ENCODE measurements at regions of chr5 and their contacts with region 1.

Region 1: GRCh38 chr5:96336351-96336985 is 96.6 kb downstream of the PCSK1 start:
- DNase-seq: peak; percentile 89
- H3K4me3 Mint-ChIP-seq: no peak overlapping the region
- H3K27ac Mint-ChIP-seq: no peak overlapping the region
- H3K4me1 Mint-ChIP-seq: peaks cover 21% of the 10 kb centered on the region
- H3K27me3 Mint-ChIP-seq: no peaks in the 10 kb centered on the region
- CTCF ChIP-seq: peak; percentile 84

Region 2: GRCh38 chr5:95846554-95847260 is 489.8 kb before region 1 on chr5:
- CTCF ChIA-PET with region 1: interaction called, 10 read pairs
- POLR2A ChIA-PET with region 1: no interaction called
- intact Hi-C with region 1: no loop called
- DNase-seq: peak; percentile 84
- H3K4me3 Mint-ChIP-seq: no peak overlapping the region
- H3K27ac Mint-ChIP-seq: no peak overlapping the region
- H3K4me1 Mint-ChIP-seq: peaks cover 32% of the 10 kb centered on the region
- H3K27me3 Mint-ChIP-seq: no peaks in the 10 kb centered on the region
- CTCF ChIP-seq: peak; percentile 91

Region 3: GRCh38 chr5:95900383-95900958 is 436.0 kb before region 1 on chr5:
- CTCF ChIA-PET with region 1: interaction called, 5 read pairs
- POLR2A ChIA-PET with region 1: interaction called, 14 read pairs
- intact Hi-C with region 1: no loop called
- DNase-seq: peak; percentile 40
- H3K4me3 Mint-ChIP-seq: no peak overlapping the region
- H3K27ac Mint-ChIP-seq: peak overlapping the region; percentile 59
- H3K4me1 Mint-ChIP-seq: peaks cover 26% of the 10 kb centered on the region
- H3K27me3 Mint-ChIP-seq: no peaks in the 10 kb centered on the region
- CTCF ChIP-seq: no peak

Region 4: GRCh38 chr5:96079075-96079474 is 257.4 kb before region 1 on chr5:
- CTCF ChIA-PET with region 1: interaction called, 11 read pairs
- POLR2A ChIA-PET with region 1: interaction called, 7 read pairs
- intact Hi-C with region 1: loop called (anchors 2 kb)
- DNase-seq: peak; percentile 93
- H3K4me3 Mint-ChIP-seq: peak overlapping the region; percentile 25
- H3K27ac Mint-ChIP-seq: peak overlapping the region; percentile 96
- H3K4me1 Mint-ChIP-seq: peaks cover 57% of the 10 kb centered on the region
- H3K27me3 Mint-ChIP-seq: no peaks in the 10 kb centered on the region
- CTCF ChIP-seq: no peak

Region 5: DNA sequence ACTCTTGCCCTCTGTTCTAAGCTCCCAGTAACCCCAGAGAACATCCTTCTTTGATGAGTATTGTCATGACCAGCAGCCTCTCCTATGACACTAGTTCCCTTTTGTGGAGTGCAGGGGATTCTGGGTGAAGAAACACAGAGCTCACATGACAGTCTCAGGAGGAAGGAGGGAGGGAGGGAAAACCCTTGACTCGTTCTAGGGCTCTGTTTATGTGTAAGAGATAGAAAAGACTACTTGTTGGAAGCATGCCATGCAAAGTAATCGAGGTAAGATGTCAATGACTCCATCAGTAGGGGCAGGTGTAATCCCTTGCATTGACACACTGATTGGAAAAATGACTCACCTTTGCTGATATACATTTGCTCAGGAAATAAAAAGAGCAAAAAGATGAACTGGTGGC is 184.6 kb before region 1 on chr5:
- CTCF ChIA-PET with region 1: interaction called, 15 read pairs
- POLR2A ChIA-PET with region 1: interaction called, 7 read pairs
- intact Hi-C with region 1: loop called (anchors 5 kb)
- DNase-seq: no peak
- H3K4me3 Mint-ChIP-seq: no peak overlapping the region
- H3K27ac Mint-ChIP-seq: no peak overlapping the region
- H3K4me1 Mint-ChIP-seq: peaks cover 28% of the 10 kb centered on the region
- H3K27me3 Mint-ChIP-seq: no peaks in the 10 kb centered on the region
- CTCF ChIP-seq: no peak

Region 6: GRCh38 chr5:96226941-96227552 is 109.4 kb before region 1 on chr5:
- CTCF ChIA-PET with region 1: interaction called, 7 read pairs
- POLR2A ChIA-PET with region 1: interaction called, 7 read pairs
- intact Hi-C with region 1: loop called (anchors 1 kb)
- DNase-seq: peak; percentile 77
- H3K4me3 Mint-ChIP-seq: peak overlapping the region; percentile 46
- H3K27ac Mint-ChIP-seq: peak overlapping the region; percentile 82
- H3K4me1 Mint-ChIP-seq: peaks cover 38% of the 10 kb centered on the region
- H3K27me3 Mint-ChIP-seq: no peaks in the 10 kb centered on the region
- CTCF ChIP-seq: no peak

Region 7: GRCh38 chr5:96384353-96384752 is 47.9 kb after region 1 on chr5:
- CTCF ChIA-PET with region 1: no interaction called
- POLR2A ChIA-PET with region 1: no interaction called
- intact Hi-C with region 1: no loop called
- DNase-seq: peak; percentile 93
- H3K4me3 Mint-ChIP-seq: no peak overlapping the region
- H3K27ac Mint-ChIP-seq: no peak overlapping the region
- H3K4me1 Mint-ChIP-seq: peaks cover 30% of the 10 kb centered on the region
- H3K27me3 Mint-ChIP-seq: no peaks in the 10 kb centered on the region
- CTCF ChIP-seq: no peak